ENCODE measurements at regions of chr1 and their contacts with region 1.

Region 1: DNA sequence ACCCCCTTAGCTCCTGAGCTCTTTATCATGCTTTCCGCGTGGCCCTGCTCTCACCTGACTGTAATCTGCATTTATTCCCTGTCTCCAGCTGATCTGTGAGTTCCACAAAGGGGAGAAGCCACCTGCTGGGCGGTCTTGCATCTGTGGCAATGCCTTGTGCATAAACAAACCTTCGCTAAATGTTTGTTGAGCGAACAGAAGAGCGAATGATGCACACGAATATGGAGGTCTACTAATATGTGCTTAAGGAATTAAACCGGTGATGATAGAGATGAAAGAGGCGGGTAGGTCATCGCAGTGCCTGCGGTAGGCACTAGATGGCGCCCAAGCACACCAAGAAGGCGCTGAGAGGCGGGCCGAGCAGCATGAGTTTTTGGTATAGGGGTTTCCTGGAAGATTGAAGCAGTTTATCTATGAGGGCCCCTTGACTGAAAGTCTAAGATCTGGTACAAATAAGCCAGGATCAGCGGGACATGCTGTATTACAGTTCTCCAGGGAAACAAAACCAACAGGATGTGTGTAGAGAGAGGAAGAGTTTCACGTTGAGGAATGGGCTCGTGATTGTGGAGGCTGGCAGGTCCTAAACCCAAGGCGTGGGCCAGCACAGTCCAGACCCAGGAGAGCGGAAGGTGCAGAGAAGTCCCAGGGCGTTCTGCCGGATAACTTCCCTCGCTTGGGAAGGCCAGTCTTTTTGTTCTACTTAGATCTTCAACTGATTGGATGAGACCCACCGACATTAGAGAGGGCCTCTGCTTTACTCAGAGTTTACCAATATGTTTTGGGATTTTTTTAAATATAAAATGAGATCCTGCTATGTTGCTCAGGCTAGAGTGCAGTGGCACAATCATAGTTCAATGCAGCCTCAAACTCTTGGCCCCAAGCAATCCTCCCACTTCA is 34.7 kb downstream of the TOMM20 start:
- DNase-seq: no peak
- H3K4me3 ChIP-seq: peak overlapping the region in 2 of 4 donors; percentile 3 to 33
- H3K27ac ChIP-seq: no peak overlapping the region
- H3K4me1 ChIP-seq: peaks cover 9 to 14% (median 9%) of the 10 kb centered on the region in 3 donors
- H3K27me3 ChIP-seq: no peaks in the 10 kb centered on the region
- CTCF ChIP-seq: peak; percentile 76 to 93 (median 84)
- POLR2A ChIP-seq: no peak

Region 2: GRCh38 chr1:234499119-234499942 is 594.6 kb before region 1 on chr1:
- intact Hi-C with region 1: loop called (anchors 5 kb)
- DNase-seq: peak; percentile 45
- H3K4me3 ChIP-seq: peak overlapping the region in 3 of 4 donors; percentile 24 to 51 (median 27)
- H3K27ac ChIP-seq: peak overlapping the region; percentile 87 to 94 (median 88)
- H3K4me1 ChIP-seq: peaks cover 13 to 46% (median 29%) of the 10 kb centered on the region in 3 donors
- H3K27me3 ChIP-seq: no peaks in the 10 kb centered on the region
- CTCF ChIP-seq: peak; percentile 87 to 98 (median 96)
- POLR2A ChIP-seq: no peak

Region 3: GRCh38 chr1:235821361-235821981 is 727.5 kb after region 1 on chr1:
- intact Hi-C with region 1: no loop called
- DNase-seq: no peak
- H3K4me3 ChIP-seq: no peak overlapping the region
- H3K27ac ChIP-seq: no peak overlapping the region
- H3K4me1 ChIP-seq: peaks cover 0 to 15% (median 0%) of the 10 kb centered on the region in 3 donors
- H3K27me3 ChIP-seq: no peaks in the 10 kb centered on the region
- CTCF ChIP-seq: peak in 1 of 6 experiments; percentile 13
- POLR2A ChIP-seq: no peak